Transverse colon (tissue), 4 donors: ENCODE measurements at regions of chr2 and their contacts with region 1.

Region 1: GRCh38 chr2:27428213-27428977 is at the start of gene NRBP1:
- DNase-seq: peak; percentile 95
- H3K4me3 ChIP-seq: peak within 1 kb of the TSS; percentile 79 to 100 (median 97)
- H3K27ac ChIP-seq: peak within 1 kb of the TSS; percentile 96 to 100 (median 100)
- H3K4me1 ChIP-seq: peaks cover 19 to 39% (median 26%) of the 10 kb centered on the region in 4 donors
- H3K27me3 ChIP-seq: no peaks in the 10 kb centered on the region
- CTCF ChIP-seq: no peak
- EP300 ChIP-seq: no peak
- POLR2A ChIP-seq: peak; percentile 98
- total RNA-seq, gene NRBP1: 38.4 to 74.8 (median 66.8) TPM

Region 2: DNA sequence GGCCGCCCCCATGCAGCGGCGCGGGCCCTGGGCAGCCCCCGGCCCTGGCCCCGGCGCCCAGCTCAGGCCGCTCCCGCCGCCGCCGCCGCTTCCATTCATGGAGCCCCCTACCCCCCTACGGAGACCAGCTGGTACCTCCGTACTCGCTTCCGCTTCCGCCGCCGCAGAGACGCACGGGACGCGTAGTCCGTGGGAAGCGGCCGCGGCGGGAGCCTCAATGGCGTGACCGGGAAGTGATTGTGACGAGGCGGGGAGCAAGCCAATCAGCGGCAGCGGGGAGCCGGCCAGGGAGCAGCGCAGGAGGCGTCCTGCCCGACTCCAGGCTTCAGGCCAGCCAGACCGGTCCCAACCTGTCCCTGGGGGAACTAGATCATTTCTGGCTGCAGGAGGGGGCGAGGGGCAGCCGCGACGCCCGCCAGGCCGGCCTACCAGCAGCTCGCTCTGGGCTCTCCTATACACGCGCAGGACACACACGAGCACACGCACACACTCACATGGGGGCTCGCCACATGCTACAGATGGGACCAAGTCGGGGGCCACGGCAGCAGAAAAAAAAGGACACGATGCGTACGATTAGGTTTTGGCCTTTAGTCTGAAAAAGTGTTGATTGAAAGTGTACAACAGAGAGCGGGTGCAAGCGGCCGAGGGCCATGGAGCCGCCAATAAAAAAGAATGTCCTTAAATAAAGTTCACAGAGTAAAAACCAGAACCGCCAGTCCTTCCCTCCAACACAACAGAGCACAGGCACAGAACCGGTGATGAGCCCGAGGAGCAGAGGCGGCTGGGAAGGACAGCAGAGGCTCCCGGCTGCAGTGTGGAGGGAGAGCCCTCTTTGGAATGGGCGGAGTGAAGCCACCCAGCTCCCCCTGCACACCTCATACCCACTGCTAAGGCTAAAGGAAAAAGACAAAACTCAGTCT is 47.5 kb before region 1 on chr2 and contains the start of gene ZNF513:
- in situ Hi-C with region 1: no loop called
- intact Hi-C with region 1: loop called (anchors 5 kb)
- DNase-seq: peak; percentile 97
- H3K4me3 ChIP-seq: peak within 1 kb of the TSS; percentile 45 to 81 (median 78)
- H3K27ac ChIP-seq: peak within 1 kb of the TSS; percentile 90 to 95 (median 94)
- H3K4me1 ChIP-seq: peaks cover 8 to 25% (median 19%) of the 10 kb centered on the region in 4 donors
- H3K27me3 ChIP-seq: no peaks in the 10 kb centered on the region
- CTCF ChIP-seq: no peak
- EP300 ChIP-seq: no peak
- POLR2A ChIP-seq: peak; percentile 67
- total RNA-seq, gene ZNF513: 24.0 to 41.0 (median 32.6) TPM